Activated CD4-positive, alpha-beta T cell treated with anti-CD3 and anti-CD28 coated beads for 36 hours (primary cell): ENCODE measurements at regions of chr1 and their contacts with region 1.

Region 1: DNA sequence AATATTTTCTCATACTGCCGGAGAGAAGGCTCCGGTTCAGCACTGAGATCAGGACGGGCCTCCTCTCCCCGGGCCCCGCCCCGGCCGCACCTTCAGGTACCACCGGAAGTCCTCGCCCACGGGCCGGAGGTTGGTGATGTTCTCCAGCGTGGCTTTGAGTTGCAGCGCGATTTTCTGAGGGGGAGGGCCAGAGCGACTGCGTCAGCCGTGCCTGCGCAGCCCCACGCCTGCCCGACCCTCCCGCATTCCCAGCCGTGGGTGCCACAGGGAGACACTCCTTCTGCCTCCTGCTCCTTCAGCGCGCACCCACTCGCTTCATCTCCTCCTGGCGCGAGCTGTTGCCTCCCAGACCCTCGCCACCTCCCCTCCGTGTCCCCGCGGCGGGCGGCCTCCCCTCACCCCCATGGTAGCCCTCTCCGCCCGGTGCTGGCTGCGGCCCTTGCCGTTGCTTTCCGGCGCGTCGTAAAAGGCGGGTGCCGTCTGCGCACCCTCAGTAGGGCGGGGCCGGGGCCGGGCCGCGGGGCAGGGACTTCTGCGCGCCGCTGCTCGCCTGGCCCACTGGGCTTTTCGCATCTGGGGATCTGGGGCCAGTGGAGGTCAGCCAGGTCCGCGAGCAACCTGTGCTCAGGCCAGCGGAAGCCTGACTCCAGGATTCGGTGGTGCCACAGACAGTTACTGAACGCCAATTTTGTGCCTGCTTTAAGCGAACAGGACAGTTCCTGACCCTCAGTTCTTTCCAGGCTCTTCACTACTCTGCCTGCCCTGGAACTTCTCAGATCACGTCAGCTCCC is at the start of gene CZIB:
- DNase-seq: peak; percentile 98
- ATAC-seq: peak; percentile 95
- H3K4me3 Mint-ChIP-seq: peak within 1 kb of the TSS; percentile 87
- H3K27ac Mint-ChIP-seq: peak within 1 kb of the TSS; percentile 94
- H3K4me1 Mint-ChIP-seq: peaks cover 24% of the 10 kb centered on the region
- H3K27me3 Mint-ChIP-seq: no peaks in the 10 kb centered on the region
- total RNA-seq, gene CZIB: 45.4 to 48.7 TPM

Region 2: GRCh38 chr1:52842643-52843309 is 377.6 kb before region 1 on chr1 and contains the start of gene ZYG11A:
- CTCF ChIA-PET with region 1: no interaction called
- POLR2A ChIA-PET with region 1: no interaction called
- intact Hi-C with region 1: loop called in 1 of 2 experiments (anchors 1 kb)
- DNase-seq: peak; percentile 89
- ATAC-seq: peak; percentile 98
- H3K4me3 Mint-ChIP-seq: peak within 1 kb of the TSS; percentile 58
- H3K27ac Mint-ChIP-seq: no peak within 1 kb of the TSS
- H3K4me1 Mint-ChIP-seq: peaks cover 5% of the 10 kb centered on the region
- H3K27me3 Mint-ChIP-seq: peaks cover 18% of the 10 kb centered on the region
- total RNA-seq, gene ZYG11A: 0.11 to 0.25 TPM

Region 3: DNA sequence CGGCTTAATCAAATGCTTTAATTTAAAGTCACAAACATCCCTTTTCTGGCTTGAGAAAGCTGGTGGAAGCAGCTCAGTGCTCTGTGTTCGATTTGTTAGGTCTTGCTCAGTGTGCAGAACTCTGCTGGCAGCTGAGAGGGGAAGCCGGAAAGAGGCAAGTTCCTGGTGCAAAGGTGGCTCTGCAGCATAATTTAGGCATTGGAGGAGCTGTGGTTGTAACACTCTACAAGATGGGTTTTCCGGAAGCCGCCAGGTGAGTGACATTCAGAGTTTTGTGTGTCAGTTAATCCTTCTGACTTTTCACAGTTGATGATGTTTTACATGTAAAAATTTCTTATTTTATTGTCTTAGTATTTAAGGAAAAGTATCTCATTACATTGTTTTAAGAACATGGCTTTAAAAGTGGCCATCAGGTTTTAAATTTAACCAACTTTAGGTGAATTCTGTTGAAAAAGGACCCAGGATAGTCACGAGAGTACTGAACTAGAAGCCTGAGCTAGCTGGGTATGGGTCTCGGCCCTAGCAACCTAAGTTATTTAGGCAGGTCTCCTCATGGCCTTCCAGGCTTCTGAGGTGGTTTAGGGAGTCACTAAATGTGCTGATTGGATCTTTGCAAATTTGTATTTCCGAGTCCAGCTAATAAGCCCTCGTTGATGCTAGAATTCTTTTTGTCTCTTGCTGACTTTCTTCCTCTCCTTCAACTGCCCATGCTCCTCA is 205.4 kb before region 1 on chr1:
- CTCF ChIA-PET with region 1: no interaction called
- POLR2A ChIA-PET with region 1: no interaction called
- intact Hi-C with region 1: loop called (anchors 1 kb)
- DNase-seq: peak; percentile 84
- ATAC-seq: peak; percentile 99
- H3K4me3 Mint-ChIP-seq: peak overlapping the region; percentile 79
- H3K27ac Mint-ChIP-seq: peak overlapping the region; percentile 89
- H3K4me1 Mint-ChIP-seq: peaks cover 24% of the 10 kb centered on the region
- H3K27me3 Mint-ChIP-seq: no peaks in the 10 kb centered on the region

Region 4: GRCh38 chr1:53186533-53186932 is 33.8 kb before region 1 on chr1:
- CTCF ChIA-PET with region 1: no interaction called
- POLR2A ChIA-PET with region 1: no interaction called
- intact Hi-C with region 1: no loop called
- DNase-seq: no peak
- ATAC-seq: no peak
- H3K4me3 Mint-ChIP-seq: no peak overlapping the region
- H3K27ac Mint-ChIP-seq: no peak overlapping the region
- H3K4me1 Mint-ChIP-seq: no peaks in the 10 kb centered on the region
- H3K27me3 Mint-ChIP-seq: peaks cover 2% of the 10 kb centered on the region

Region 5: DNA sequence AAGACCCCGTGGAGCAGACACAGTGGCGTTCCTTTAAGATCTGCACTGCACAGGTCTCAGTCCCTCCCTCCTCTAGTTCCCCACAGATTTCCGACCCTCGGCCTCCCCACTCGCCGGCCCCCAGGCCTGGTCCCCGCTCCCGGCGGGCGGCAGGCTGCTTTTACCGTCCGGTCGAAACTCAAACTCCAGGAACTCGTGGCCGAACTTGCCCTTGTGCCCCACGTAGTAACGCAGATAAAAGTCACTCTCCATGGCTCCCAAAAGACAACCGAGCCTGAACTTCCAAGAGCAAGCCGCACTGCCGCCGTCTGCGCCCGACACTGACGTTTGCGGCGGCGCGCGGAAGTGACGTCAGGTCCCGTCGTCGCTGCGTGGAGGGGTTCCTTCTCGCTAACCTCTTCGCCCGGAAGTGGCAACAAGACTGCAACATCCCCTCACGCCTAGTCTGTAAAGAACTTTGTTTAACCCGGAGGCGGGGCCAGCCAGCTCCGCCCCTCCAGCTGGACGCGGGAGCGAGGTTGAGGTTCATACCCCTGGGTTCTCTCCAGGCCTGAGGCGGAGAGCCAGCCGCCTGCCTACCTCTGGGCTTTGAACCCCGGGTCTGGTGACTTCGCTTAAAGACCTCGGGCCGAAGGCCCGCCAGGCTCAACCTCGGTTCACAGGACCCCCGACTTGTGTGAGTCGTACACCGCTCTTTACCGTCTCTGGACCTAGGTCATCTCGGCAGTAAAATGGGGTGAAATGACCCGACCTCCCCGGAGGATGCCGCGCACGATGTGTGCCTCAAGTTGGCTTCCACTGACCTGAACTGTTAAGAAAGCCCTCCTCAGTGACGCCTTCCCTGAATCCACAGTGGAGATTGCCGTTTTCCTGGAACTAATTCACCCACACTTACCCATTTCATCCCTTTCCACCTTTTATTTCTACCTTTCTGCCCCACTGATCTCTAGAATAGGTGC is 18.1 kb after region 1 on chr1 and contains the start of gene MAGOH:
- CTCF ChIA-PET with region 1: interaction called, 4 read pairs
- POLR2A ChIA-PET with region 1: no interaction called
- intact Hi-C with region 1: loop called (anchors 1 kb)
- DNase-seq: peak; percentile 95
- ATAC-seq: peak; percentile 98
- H3K4me3 Mint-ChIP-seq: peak within 1 kb of the TSS; percentile 96
- H3K27ac Mint-ChIP-seq: peak within 1 kb of the TSS; percentile 93
- H3K4me1 Mint-ChIP-seq: peaks cover 24% of the 10 kb centered on the region
- H3K27me3 Mint-ChIP-seq: no peaks in the 10 kb centered on the region
- total RNA-seq, gene MAGOH: 73.7 to 92.3 TPM

Region 6: GRCh38 chr1:53285969-53286760 is 65.8 kb after region 1 on chr1:
- CTCF ChIA-PET with region 1: no interaction called
- POLR2A ChIA-PET with region 1: no interaction called
- intact Hi-C with region 1: no loop called
- DNase-seq: no peak
- ATAC-seq: peak; percentile 44
- H3K4me3 Mint-ChIP-seq: no peak overlapping the region
- H3K27ac Mint-ChIP-seq: no peak overlapping the region
- H3K4me1 Mint-ChIP-seq: no peaks in the 10 kb centered on the region
- H3K27me3 Mint-ChIP-seq: no peaks in the 10 kb centered on the region

Region 7: DNA sequence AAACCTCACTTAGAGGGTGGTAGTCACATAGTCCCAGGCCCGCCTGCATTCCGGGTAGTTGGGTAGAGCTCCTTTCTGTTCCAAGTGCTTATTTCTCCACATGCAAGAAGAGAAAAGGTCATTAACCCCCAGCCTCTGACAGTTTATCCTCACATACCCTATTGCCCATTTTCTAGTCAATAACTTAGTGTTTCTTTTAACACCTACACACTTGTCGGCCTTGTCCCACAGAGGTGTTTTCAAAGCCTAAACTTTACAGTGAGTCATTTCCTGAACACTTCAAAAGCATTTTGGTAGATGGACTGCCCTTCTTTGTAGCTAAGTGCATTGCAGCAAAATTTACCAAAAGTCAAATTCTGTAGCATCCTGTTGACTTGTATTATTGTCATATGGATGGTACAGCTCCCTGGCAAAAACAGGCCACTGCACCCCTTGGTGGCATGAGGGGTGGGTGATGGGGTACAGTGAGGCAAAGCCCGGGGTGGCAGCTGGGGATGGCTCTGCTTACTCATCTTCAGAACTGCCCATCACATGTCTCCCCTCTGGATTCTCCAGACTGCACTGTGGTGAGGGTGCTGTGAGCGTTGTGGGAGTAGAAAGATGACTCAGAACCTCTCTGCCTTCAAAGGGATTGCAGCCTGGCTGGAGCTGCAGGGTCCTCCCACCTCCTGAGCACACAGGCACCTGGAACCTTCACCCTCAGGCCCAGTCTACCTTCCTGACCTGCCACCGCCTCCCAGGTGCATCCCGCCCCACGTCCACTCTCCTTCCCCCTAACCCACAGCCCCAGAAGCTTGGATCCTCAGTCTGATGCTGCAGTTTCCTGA is 193.0 kb after region 1 on chr1:
- CTCF ChIA-PET with region 1: no interaction called
- POLR2A ChIA-PET with region 1: no interaction called
- intact Hi-C with region 1: loop called in 1 of 2 experiments (anchors 1 kb)
- DNase-seq: peak; percentile 74
- ATAC-seq: peak; percentile 89
- H3K4me3 Mint-ChIP-seq: peak overlapping the region; percentile 10
- H3K27ac Mint-ChIP-seq: peak overlapping the region; percentile 88
- H3K4me1 Mint-ChIP-seq: peaks cover 48% of the 10 kb centered on the region
- H3K27me3 Mint-ChIP-seq: no peaks in the 10 kb centered on the region